Activated CD8-positive, alpha-beta T cell treated with anti-CD3 and anti-CD28 coated beads for 36 hours (primary cell): ENCODE measurements at regions of chr1 and their contacts with region 1.

Region 1: GRCh38 chr1:109397538-109398342 is at the start of gene SORT1:
- DNase-seq: peak; percentile 80
- ATAC-seq: peak; percentile 99
- H3K4me3 Mint-ChIP-seq: peak within 1 kb of the TSS; percentile 77
- H3K27ac Mint-ChIP-seq: no peak within 1 kb of the TSS
- H3K4me1 Mint-ChIP-seq: peaks cover 8% of the 10 kb centered on the region
- H3K27me3 Mint-ChIP-seq: peaks cover 33% of the 10 kb centered on the region
- CTCF ChIP-seq: no peak
- total RNA-seq, gene SORT1: 2.5 to 3.2 TPM

Region 2: DNA sequence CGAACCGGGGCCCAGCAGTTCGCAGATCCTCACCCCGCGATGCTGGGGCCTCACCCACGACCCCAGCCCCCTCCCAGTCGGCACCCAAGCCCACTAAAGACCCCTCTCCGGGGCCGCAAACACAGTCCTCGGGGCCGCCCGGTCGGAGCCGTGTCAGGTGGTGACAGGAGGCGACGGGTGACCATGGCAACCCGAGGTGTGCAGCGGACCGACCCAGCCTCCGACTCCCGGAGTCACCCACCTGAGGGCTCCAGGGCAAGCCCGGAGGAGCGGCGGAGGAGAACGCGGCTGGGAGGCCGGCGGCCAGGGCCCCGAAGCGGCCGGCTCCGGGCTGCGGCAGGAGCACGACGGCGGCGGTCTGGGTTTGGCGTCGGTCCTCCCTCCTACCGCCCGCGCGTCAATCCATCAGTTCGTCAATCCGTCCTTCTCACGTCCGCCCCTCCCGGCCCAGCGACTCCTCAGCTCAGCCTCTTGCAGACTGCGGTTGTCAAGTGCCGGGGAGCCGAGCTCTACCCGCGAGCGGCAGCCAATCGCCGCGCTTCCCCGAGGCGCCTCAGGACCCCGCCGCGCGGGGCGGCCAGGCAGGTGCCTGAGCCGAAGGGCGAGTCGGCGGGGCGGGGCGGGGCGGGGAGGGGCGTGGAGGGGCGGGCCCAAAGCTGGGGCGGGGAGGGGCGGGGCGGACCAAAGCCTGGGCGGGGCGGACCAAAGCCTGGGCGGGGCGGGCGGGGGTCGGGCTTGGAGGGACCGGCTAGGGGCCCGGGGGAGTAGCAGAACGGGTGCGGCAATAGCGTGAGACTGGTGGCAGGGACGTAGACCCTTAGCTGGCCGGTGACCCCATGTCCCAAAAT is 355.9 kb before region 1 on chr1 and contains the start of gene WDR47:
- CTCF ChIA-PET with region 1: no interaction called
- POLR2A ChIA-PET with region 1: no interaction called
- intact Hi-C with region 1: no loop called
- DNase-seq: peak; percentile 97
- ATAC-seq: peak; percentile 99
- H3K4me3 Mint-ChIP-seq: peak within 1 kb of the TSS; percentile 84
- H3K27ac Mint-ChIP-seq: peak within 1 kb of the TSS; percentile 75
- H3K4me1 Mint-ChIP-seq: peaks cover 12% of the 10 kb centered on the region
- H3K27me3 Mint-ChIP-seq: no peaks in the 10 kb centered on the region
- CTCF ChIP-seq: no peak
- total RNA-seq, gene WDR47: 7.2 to 8.4 TPM

Region 3: DNA sequence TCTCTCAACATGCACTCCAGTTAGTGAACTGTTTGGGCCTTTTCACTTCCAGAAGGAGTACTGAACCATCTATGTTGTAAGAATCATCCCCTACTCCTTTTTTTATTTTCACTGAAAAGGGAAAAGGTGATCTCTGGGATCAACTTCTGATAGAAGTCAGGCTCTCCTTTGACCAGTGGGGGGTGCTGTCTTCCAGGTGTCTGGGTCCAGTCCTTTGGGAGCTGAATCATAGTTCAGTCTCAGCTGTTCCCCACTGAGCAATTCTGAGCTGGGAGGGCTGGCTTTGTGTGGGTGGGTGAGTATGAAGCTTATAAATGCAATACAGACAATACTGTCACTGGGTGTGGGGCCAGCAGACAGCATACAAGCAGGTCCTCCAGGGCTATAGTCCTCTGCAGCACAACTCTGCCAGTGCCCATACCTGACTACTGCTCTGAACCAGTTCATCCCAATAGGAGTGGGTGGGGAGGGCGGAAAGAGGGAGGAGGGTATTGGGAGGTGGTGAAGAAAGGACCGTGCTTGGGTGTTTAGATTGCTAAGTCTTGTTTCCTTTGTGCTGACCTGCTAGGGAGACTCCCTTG is 196.5 kb before region 1 on chr1:
- CTCF ChIA-PET with region 1: interaction called, 54 read pairs
- POLR2A ChIA-PET with region 1: no interaction called
- intact Hi-C with region 1: no loop called
- DNase-seq: peak; percentile 93
- ATAC-seq: peak; percentile 96
- H3K4me3 Mint-ChIP-seq: no peak overlapping the region
- H3K27ac Mint-ChIP-seq: no peak overlapping the region
- H3K4me1 Mint-ChIP-seq: peaks cover 19% of the 10 kb centered on the region
- H3K27me3 Mint-ChIP-seq: no peaks in the 10 kb centered on the region
- CTCF ChIP-seq: peak; percentile 69

Region 4: GRCh38 chr1:109239580-109240095 is 158.1 kb before region 1 on chr1:
- CTCF ChIA-PET with region 1: interaction called, 30 read pairs
- POLR2A ChIA-PET with region 1: interaction called, 5 read pairs
- intact Hi-C with region 1: no loop called
- DNase-seq: peak; percentile 58
- ATAC-seq: peak; percentile 77
- H3K4me3 Mint-ChIP-seq: no peak overlapping the region
- H3K27ac Mint-ChIP-seq: peak overlapping the region; percentile 27
- H3K4me1 Mint-ChIP-seq: peaks cover 14% of the 10 kb centered on the region
- H3K27me3 Mint-ChIP-seq: peaks cover 3% of the 10 kb centered on the region
- CTCF ChIP-seq: peak; percentile 37

Region 5: GRCh38 chr1:109263597-109264398 is 133.9 kb before region 1 on chr1:
- CTCF ChIA-PET with region 1: interaction called, 47 read pairs
- POLR2A ChIA-PET with region 1: no interaction called
- intact Hi-C with region 1: loop called (anchors 5 kb)
- DNase-seq: peak; percentile 89
- ATAC-seq: peak; percentile 99
- H3K4me3 Mint-ChIP-seq: peak overlapping the region; percentile 12
- H3K27ac Mint-ChIP-seq: peak overlapping the region; percentile 76
- H3K4me1 Mint-ChIP-seq: peaks cover 2% of the 10 kb centered on the region
- H3K27me3 Mint-ChIP-seq: no peaks in the 10 kb centered on the region
- CTCF ChIP-seq: peak; percentile 97

Region 6: GRCh38 chr1:109282952-109283747 is 114.6 kb before region 1 on chr1 and contains the start of gene PSRC1:
- CTCF ChIA-PET with region 1: interaction called, 123 read pairs
- POLR2A ChIA-PET with region 1: interaction called, 5 read pairs
- intact Hi-C with region 1: no loop called
- DNase-seq: peak; percentile 93
- ATAC-seq: peak; percentile 98
- H3K4me3 Mint-ChIP-seq: peak within 1 kb of the TSS; percentile 79
- H3K27ac Mint-ChIP-seq: peak within 1 kb of the TSS; percentile 90
- H3K4me1 Mint-ChIP-seq: peaks cover 11% of the 10 kb centered on the region
- H3K27me3 Mint-ChIP-seq: no peaks in the 10 kb centered on the region
- CTCF ChIP-seq: peak; percentile 58
- total RNA-seq, gene PSRC1: 12.9 to 14.0 TPM

Region 7: DNA sequence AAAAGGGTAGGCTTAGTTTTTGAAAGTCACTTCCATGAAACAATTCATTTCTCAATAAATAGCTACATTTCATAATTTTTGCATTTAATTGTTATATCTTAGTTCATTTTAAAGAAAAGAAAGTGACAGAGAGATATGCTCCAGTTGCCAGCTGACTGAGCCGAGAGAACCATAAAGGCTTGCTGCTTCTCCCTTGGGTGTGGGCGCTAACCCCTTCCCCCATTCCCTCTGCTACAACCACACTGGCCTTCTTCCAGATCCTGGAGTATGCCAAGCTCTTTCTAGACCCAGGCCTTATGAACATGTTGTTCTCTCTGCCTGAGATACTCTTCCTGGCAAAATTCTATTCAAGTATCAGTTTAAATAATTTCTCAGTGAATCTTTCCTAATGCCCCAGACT is 12.3 kb before region 1 on chr1:
- CTCF ChIA-PET with region 1: interaction called, 56 read pairs
- POLR2A ChIA-PET with region 1: interaction called, 5 read pairs
- intact Hi-C with region 1: no loop called
- DNase-seq: no peak
- ATAC-seq: no peak
- H3K4me3 Mint-ChIP-seq: no peak overlapping the region
- H3K27ac Mint-ChIP-seq: no peak overlapping the region
- H3K4me1 Mint-ChIP-seq: peaks cover 7% of the 10 kb centered on the region
- H3K27me3 Mint-ChIP-seq: peaks cover 10% of the 10 kb centered on the region
- CTCF ChIP-seq: no peak

Region 8: GRCh38 chr1:109446085-109446695 is 48.5 kb after region 1 on chr1:
- CTCF ChIA-PET with region 1: no interaction called
- POLR2A ChIA-PET with region 1: no interaction called
- intact Hi-C with region 1: no loop called
- DNase-seq: no peak
- ATAC-seq: no peak
- H3K4me3 Mint-ChIP-seq: no peak overlapping the region
- H3K27ac Mint-ChIP-seq: no peak overlapping the region
- H3K4me1 Mint-ChIP-seq: no peaks in the 10 kb centered on the region
- H3K27me3 Mint-ChIP-seq: peaks cover 21% of the 10 kb centered on the region
- CTCF ChIP-seq: no peak